PC-3 (cell line): ENCODE measurements at regions of chr14 and their contacts with region 1.

Region 1: DNA sequence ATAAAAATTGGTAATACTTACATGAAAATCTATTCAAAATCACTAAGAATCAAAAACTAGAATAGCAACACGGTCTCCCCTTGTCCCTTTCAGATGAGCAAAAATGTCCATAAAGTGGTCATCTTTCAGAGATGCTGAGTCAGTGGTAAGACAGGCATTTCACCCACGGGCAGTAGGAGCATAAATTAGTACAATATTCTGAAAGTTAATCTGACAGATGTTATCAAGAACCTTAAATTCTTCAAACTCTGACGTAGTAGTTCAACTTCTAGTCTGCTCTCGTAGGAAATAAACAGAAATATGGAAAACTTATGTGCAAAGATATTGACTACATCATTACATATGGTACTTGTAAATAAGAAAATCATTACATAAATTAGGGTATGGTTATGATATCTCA is 33.1 kb upstream of the GNPNAT1 start:
- DNase-seq: no peak
- ATAC-seq: no peak
- H3K4me3 ChIP-seq: no peak overlapping the region
- H3K27ac ChIP-seq: no peak overlapping the region
- H3K4me1 ChIP-seq: no peaks in the 10 kb centered on the region
- H3K27me3 ChIP-seq: no peaks in the 10 kb centered on the region
- CTCF ChIP-seq: no peak

Region 2: DNA sequence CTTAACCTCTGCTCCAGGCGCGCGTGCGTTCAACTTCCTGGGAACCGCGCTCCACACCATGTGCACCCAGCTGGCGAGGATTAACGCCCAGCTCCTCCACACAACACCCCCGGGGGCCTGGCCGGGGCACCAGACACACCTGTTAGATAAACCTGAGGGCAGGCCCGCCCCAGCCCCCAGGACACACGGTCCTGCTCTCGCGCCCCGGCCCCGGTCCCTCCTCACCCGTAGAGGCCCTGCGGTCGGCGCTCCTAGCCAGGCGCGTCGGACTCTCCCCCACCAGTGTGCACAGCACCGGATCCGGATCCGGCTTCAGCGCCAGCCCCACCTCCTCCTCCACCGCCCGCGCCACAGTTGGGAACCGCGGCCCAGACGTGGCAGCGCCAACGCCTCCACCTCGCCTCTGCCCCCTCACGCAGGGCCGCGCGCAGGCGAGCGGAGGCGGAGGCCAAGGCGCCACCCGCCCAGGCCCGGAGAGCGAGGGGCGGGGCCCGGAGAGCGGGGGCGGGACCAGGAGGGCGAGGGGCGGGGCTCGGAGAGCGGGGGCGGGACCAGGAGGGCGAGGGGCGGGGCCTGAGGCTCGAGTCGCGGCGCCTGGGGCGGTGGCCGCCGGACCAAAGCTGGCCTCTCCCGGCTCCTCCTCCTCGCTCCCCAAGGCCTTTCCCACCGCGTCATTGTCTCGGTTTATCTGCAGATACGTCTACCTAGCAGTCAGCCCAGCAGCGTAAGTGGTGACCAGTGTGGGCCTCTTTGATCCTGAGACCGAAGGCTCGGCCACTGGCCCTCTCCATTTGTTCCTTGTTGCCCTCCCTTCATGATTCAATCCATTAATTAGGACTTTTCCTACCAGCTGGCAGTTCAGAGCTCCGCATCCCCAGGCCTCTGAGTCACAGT is 33.1 kb before region 1 on chr14 and contains the start of gene GNPNAT1:
- CTCF ChIA-PET with region 1: no interaction called
- POLR2A ChIA-PET with region 1: interaction called, 10 read pairs
- intact Hi-C with region 1: no loop called
- DNase-seq: peak; percentile 97
- ATAC-seq: peak; percentile 90
- H3K4me3 ChIP-seq: peak within 1 kb of the TSS; percentile 78
- H3K27ac ChIP-seq: peak within 1 kb of the TSS; percentile 86
- H3K4me1 ChIP-seq: peaks cover 25% of the 10 kb centered on the region
- H3K27me3 ChIP-seq: no peaks in the 10 kb centered on the region
- CTCF ChIP-seq: no peak
- total RNA-seq, gene GNPNAT1: 38.2 and 44.5 TPM in 2 replicates

Region 3: DNA sequence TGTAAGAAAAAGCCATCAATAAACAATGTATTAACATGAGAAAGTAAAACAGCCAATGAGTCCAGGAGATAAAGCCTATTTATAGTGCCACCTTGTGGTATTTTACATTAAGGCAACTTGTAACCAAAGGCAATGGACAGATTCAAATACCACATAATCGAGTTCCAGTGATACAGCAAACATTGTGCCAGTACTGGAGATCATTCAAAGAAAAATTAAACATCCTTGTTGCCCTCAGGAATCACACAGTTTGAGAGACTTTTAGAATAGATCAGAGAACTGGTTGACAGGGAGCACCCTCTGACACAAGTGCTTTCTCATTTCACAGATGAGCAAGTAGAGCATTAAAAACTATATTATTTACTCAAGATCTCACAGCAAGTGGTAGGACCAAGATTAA is 230.5 kb after region 1 on chr14:
- CTCF ChIA-PET with region 1: interaction called, 3 read pairs
- POLR2A ChIA-PET with region 1: no interaction called
- intact Hi-C with region 1: loop called (anchors 1 kb)
- DNase-seq: peak; percentile 78
- ATAC-seq: peak; percentile 95
- H3K4me3 ChIP-seq: no peak overlapping the region
- H3K27ac ChIP-seq: no peak overlapping the region
- H3K4me1 ChIP-seq: peaks cover 1% of the 10 kb centered on the region; the same call in 1 of the 2 replicates
- H3K27me3 ChIP-seq: no peaks in the 10 kb centered on the region
- CTCF ChIP-seq: peak; percentile 94